Naive thymus-derived CD4-positive, alpha-beta T cell (primary cell): ENCODE measurements at regions of chr3 and their contacts with region 1.

Region 1: GRCh38 chr3:11803977-11804892 is 42.5 kb downstream of the TAMM41 start:
- DNase-seq: peak in 7 of 9 donors; percentile 30 to 57 (median 44)
- ATAC-seq: peak; percentile 85
- H3K4me3 ChIP-seq: no peak overlapping the region
- H3K4me3 Mint-ChIP-seq: no peak overlapping the region
- H3K27ac ChIP-seq: no peak overlapping the region
- H3K27ac Mint-ChIP-seq: no peak overlapping the region
- H3K4me1 ChIP-seq: no peaks in the 10 kb centered on the region
- H3K4me1 Mint-ChIP-seq: peaks cover 0 to 21% (median 4%) of the 10 kb centered on the region in 7 donors
- H3K27me3 ChIP-seq: no peaks in the 10 kb centered on the region
- H3K27me3 Mint-ChIP-seq: no peaks in the 10 kb centered on the region

Region 2: DNA sequence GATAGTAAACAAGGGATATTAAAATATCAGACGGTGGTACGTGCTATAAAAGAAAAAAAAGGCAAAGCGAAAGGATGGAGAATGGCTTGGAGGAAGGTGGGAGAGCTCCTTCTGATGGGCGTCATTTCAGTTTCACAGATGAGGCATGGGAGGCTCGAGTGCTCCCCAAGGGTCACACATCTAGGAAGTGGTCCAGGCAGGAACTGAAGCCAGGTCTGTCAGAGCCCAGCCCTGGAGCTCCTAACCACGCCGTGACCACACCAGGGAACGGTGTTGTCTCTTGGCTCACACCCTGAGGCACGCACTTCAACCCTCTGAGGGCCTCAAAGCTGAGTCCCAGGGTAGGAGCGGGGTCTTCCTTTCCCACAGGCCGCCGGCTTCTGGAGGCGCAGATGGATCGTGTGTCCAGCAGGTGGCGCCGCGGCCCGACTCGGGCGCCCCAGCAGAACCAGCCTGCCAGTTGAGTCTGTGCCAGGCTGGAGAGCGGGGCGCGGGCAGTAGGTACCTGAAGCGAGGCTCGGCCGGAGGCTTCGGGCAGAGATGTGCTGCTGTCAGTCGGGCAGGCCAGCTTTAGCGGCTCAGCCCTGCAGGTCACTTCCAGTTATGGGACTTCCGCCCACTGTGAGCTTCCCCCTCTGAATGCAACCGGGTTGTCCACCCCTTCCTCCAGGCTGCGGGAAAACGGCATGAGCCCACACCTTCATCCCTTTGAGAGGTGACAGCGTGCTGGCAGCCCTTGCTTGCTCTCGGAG is 743.6 kb before region 1 on chr3:
- CTCF ChIA-PET with region 1: no interaction called
- POLR2A ChIA-PET with region 1: no interaction called
- intact Hi-C with region 1: loop called in 1 of 2 experiments (anchors 5 kb)
- DNase-seq: peak in 6 of 9 donors; percentile 11 to 55 (median 26)
- ATAC-seq: peak; percentile 63
- H3K4me3 ChIP-seq: no peak overlapping the region
- H3K4me3 Mint-ChIP-seq: peak overlapping the region in 1 of 10 donors; percentile 18
- H3K27ac ChIP-seq: no peak overlapping the region
- H3K27ac Mint-ChIP-seq: no peak overlapping the region
- H3K4me1 ChIP-seq: no peaks in the 10 kb centered on the region
- H3K4me1 Mint-ChIP-seq: peaks cover 0 to 5% (median 0%) of the 10 kb centered on the region in 7 donors
- H3K27me3 ChIP-seq: no peaks in the 10 kb centered on the region
- H3K27me3 Mint-ChIP-seq: peaks cover 2 to 26% (median 20%) of the 10 kb centered on the region in 5 donors

Region 3: DNA sequence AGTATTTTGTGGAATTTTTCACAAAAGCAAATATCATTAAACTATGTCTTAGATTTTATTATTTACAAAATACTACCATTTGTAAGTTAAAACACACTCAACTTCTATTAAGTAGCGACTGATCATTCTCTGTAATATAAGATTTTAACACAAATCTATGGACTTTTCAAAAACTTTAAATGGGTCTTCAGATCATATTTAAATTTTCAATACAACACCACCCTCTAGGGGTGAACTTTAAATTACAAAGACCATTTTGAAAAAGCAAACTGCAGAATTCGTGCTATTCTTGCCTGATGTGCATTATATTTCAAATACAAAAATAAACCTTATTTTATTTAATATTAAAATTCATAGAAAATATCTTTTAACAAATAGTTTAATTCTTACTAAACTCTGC is 152.3 kb before region 1 on chr3:
- CTCF ChIA-PET with region 1: no interaction called
- POLR2A ChIA-PET with region 1: no interaction called
- intact Hi-C with region 1: loop called (anchors 1 kb)
- DNase-seq: peak in 7 of 9 donors; percentile 23 to 55 (median 48)
- ATAC-seq: peak; percentile 41
- H3K4me3 ChIP-seq: no peak overlapping the region
- H3K4me3 Mint-ChIP-seq: no peak overlapping the region
- H3K27ac ChIP-seq: no peak overlapping the region
- H3K27ac Mint-ChIP-seq: no peak overlapping the region
- H3K4me1 ChIP-seq: no peaks in the 10 kb centered on the region
- H3K4me1 Mint-ChIP-seq: peaks cover 0 to 13% (median 4%) of the 10 kb centered on the region in 7 donors
- H3K27me3 ChIP-seq: no peaks in the 10 kb centered on the region
- H3K27me3 Mint-ChIP-seq: peaks cover 0 to 28% (median 0%) of the 10 kb centered on the region in 5 donors

Region 4: GRCh38 chr3:11735638-11736037 is 68.6 kb before region 1 on chr3:
- CTCF ChIA-PET with region 1: no interaction called
- POLR2A ChIA-PET with region 1: no interaction called
- intact Hi-C with region 1: loop called in 1 of 2 experiments (anchors 1 kb)
- DNase-seq: no peak
- ATAC-seq: peak; percentile 41
- H3K4me3 ChIP-seq: no peak overlapping the region
- H3K4me3 Mint-ChIP-seq: no peak overlapping the region
- H3K27ac ChIP-seq: no peak overlapping the region
- H3K27ac Mint-ChIP-seq: peak overlapping the region in 1 of 9 donors; percentile 3
- H3K4me1 ChIP-seq: no peaks in the 10 kb centered on the region
- H3K4me1 Mint-ChIP-seq: peaks cover 0 to 6% (median 3%) of the 10 kb centered on the region in 7 donors
- H3K27me3 ChIP-seq: no peaks in the 10 kb centered on the region
- H3K27me3 Mint-ChIP-seq: peaks cover 0 to 9% (median 0%) of the 10 kb centered on the region in 5 donors

Region 5: GRCh38 chr3:11785024-11785377 is 19.2 kb before region 1 on chr3:
- CTCF ChIA-PET with region 1: interaction called, 5 read pairs
- POLR2A ChIA-PET with region 1: no interaction called
- intact Hi-C with region 1: loop called in 1 of 2 experiments (anchors 2 kb)
- DNase-seq: peak in 6 of 9 donors; percentile 21 to 48 (median 34)
- ATAC-seq: peak; percentile 76
- H3K4me3 ChIP-seq: no peak overlapping the region
- H3K4me3 Mint-ChIP-seq: peak overlapping the region in 8 of 10 donors; percentile 26 to 86 (median 59)
- H3K27ac ChIP-seq: no peak overlapping the region
- H3K27ac Mint-ChIP-seq: peak overlapping the region in 7 of 9 donors; percentile 53 to 99 (median 82)
- H3K4me1 ChIP-seq: peaks cover 3 to 9% of the 10 kb centered on the region in 2 donors
- H3K4me1 Mint-ChIP-seq: peaks cover 10 to 27% (median 22%) of the 10 kb centered on the region in 7 donors
- H3K27me3 ChIP-seq: no peaks in the 10 kb centered on the region
- H3K27me3 Mint-ChIP-seq: no peaks in the 10 kb centered on the region